Colonic mucosa (tissue), 4 donors: ENCODE measurements at regions of chr14 and their contacts with region 1.

Region 1: GRCh38 chr14:34982417-34983147 is at the start of gene SRP54:
- DNase-seq: peak; percentile 100
- H3K4me3 ChIP-seq: peak within 1 kb of the TSS; percentile 83
- H3K27ac ChIP-seq: peak within 1 kb of the TSS; percentile 99
- H3K4me1 ChIP-seq: peaks cover 7% of the 10 kb centered on the region
- H3K27me3 ChIP-seq: no peaks in the 10 kb centered on the region
- CTCF ChIP-seq: no peak
- total RNA-seq, gene SRP54: 43.5 to 45.6 TPM

Region 2: GRCh38 chr14:34873591-34874385 is 108.8 kb before region 1 on chr14:
- intact Hi-C with region 1: loop called (anchors 2 kb)
- DNase-seq: peak; percentile 84
- H3K4me3 ChIP-seq: peak overlapping the region; percentile 79
- H3K27ac ChIP-seq: peak overlapping the region; percentile 99
- H3K4me1 ChIP-seq: no peaks in the 10 kb centered on the region
- H3K27me3 ChIP-seq: no peaks in the 10 kb centered on the region
- CTCF ChIP-seq: no peak

Region 3: DNA sequence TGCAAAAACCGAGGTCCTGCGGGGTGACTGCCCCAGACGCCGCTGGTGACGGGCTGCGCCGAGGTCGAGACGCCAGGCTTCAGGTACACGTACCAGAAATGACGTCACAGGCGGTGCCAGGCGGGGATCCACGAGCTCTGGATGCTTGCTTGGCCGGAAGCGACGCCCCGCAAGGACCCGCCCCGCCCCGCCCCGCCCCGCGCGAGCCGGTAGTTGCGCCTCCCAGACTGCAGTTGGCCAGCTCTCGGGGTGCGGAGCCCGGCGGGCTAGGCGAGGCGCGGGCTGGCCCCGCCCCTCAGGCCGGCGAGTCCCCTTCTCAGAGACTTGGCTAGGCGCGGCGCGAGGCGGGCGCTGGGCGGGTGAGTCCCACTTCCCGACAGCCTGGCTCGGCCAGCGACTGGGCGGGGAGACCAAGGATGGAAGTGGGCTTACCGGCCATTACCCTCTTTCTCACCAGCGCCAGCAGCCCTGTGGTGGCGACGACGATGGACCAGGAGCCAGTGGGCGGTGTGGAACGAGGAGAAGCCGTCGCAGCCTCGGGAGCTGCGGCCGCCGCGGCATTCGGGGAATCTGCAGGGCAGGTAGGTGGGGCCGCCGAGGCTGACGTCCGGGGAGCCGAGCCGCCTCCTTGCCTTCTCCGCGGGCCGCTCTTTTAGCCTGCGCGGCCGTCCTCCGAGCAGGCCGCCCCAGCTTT is 63.6 kb after region 1 on chr14 and contains the start of gene FAM177A1:
- intact Hi-C with region 1: loop called (anchors 10 kb)
- DNase-seq: peak; percentile 99
- H3K4me3 ChIP-seq: peak within 1 kb of the TSS; percentile 75
- H3K27ac ChIP-seq: peak within 1 kb of the TSS; percentile 99
- H3K4me1 ChIP-seq: peaks cover 17% of the 10 kb centered on the region
- H3K27me3 ChIP-seq: no peaks in the 10 kb centered on the region
- CTCF ChIP-seq: no peak
- total RNA-seq, gene FAM177A1: 114 to 153 TPM